ENCODE measurements at regions of chr12 and their contacts with region 1.

Region 1: DNA sequence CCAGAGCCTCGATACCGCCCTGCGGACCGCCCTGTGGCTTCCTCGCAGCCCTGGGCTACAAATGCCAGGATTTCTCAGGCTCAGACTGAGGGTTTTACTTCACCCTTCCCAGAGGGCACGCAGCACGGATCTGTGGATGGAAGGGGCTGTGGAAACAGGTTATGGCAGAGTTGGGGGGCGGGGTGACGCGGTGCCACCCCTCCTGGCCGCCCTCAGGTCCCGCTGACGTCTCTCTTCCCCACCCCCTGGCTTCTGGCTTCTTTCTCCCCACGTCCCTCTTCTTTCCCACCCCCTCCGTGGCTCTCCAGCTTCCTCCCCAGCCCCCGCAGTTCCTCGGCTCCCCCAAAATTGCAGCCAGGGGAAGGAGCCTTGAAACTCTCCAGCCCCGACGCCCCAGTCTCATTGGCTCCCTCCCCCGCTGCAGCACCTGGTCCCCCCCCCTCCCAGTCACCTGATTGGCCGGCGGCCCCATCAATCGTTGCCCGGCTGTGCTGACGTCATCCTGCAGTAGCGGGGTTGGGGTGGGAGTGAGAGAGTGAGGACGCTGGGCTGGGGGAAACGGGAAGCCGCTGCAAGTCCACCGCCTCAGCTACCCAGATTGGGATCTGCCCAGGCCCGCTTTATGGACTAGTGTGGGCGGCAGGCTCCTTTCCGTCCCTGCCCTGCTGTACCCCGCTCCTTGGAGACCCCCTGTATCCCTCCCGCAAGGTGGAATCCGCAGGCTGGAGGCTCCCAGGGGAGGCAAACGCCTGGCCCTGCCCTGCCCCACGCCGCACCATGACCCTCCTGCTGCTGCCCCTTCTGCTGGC is at the start of gene CLSTN3:
- DNase-seq: peak; percentile 54 to 87
- H3K4me3 ChIP-seq: peak within 1 kb of the TSS; percentile 66
- H3K27ac ChIP-seq: no peak within 1 kb of the TSS
- H3K4me1 ChIP-seq: peaks cover 19% of the 10 kb centered on the region
- H3K27me3 ChIP-seq: no peaks in the 10 kb centered on the region
- CTCF ChIP-seq: no peak
- total RNA-seq, gene CLSTN3: 111 and 153 TPM in 2 replicates

Region 2: DNA sequence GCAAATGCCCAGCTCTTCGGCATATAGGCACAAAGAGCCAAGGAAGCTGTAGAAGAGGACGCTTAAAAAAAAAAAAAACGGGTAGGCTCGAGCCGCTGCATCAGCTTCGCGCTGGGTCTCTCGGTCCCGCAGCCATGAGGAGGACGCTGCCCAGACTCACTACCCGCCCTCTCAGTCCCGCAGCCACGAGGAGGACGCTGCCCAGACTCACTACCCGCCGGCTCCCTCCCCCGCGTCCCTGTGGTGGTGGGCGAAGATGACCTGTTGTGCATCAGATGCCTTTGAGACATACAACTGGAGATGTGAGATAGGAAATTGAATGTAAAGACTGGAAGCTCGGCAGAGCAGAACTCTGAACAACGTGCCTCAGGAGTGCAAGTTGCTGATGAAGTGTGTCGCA is 245.5 kb before region 1 on chr12:
- CTCF ChIA-PET with region 1: no interaction called
- POLR2A ChIA-PET with region 1: interaction called, 20 read pairs
- intact Hi-C with region 1: no loop called
- DNase-seq: no peak
- H3K4me3 ChIP-seq: no peak overlapping the region
- H3K27ac ChIP-seq: no peak overlapping the region
- H3K4me1 ChIP-seq: 0 out of 2 replicates have a peak, but pooled peaks cover 5% of the 10 kb centered on the region
- H3K27me3 ChIP-seq: no peaks in the 10 kb centered on the region
- CTCF ChIP-seq: no peak

Region 3: DNA sequence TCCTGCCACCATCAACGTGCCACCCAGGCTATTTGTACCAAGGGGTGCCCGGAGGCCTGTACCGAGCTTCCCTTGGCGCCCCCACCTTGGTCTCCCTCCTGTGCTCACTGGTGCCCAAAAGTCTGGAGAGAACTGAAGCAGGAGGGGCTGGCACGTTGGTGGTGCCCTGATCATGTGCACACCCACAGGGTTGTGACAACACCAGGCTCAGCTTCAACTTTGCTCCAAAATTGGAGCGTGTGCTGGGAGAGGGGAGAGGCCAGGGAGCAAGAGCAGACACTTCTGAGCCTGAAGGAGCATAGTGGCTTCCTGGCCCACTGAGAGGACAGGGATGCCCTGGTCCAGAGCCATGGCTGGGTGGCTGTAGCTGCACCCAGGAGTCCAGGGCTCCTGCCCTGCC is 98.8 kb before region 1 on chr12:
- CTCF ChIA-PET with region 1: no interaction called
- POLR2A ChIA-PET with region 1: interaction called, 14 read pairs
- intact Hi-C with region 1: no loop called
- DNase-seq: no peak
- H3K4me3 ChIP-seq: no peak overlapping the region
- H3K27ac ChIP-seq: no peak overlapping the region
- H3K4me1 ChIP-seq: no peaks in the 10 kb centered on the region
- H3K27me3 ChIP-seq: no peaks in the 10 kb centered on the region; the same call in 1 of the 2 replicates
- CTCF ChIP-seq: no peak

Region 4: DNA sequence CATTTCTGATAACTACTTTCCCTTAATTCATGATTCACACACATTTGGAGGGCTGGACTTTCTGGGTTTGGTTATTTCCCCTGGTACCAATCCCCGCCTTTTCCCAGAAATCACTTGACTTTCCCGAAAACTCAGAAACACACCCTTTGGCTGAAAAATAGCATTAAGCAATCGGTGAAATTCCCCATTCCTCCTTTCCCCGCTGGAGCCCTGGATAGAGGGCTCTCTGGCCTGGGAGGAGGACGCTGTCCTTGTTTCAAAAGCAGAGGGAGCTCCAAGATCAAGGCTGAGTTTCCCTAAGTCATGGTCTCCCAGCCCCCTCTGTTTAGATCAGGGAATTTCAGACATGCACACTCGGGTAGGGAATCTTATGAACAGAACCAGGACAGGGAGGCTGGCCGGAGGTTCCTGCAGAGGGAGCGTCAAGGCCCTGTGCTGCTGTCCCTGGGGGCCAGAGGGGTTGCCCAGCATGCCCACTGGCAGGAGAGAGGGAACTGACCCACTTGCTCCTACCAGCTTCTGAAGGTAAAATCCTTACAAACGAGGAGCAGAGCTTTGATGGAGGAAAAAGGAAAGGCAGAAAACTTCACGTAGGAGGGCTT is 69.6 kb before region 1 on chr12 and contains the start of gene C1S:
- CTCF ChIA-PET with region 1: no interaction called
- POLR2A ChIA-PET with region 1: no interaction called
- intact Hi-C with region 1: no loop called
- DNase-seq: peak; percentile 68 to 69
- H3K4me3 ChIP-seq: no peak within 1 kb of the TSS
- H3K27ac ChIP-seq: no peak within 1 kb of the TSS
- H3K4me1 ChIP-seq: peaks cover 16% of the 10 kb centered on the region; the same call in 1 of the 2 replicates
- H3K27me3 ChIP-seq: peaks cover 2% of the 10 kb centered on the region; the same call in 1 of the 2 replicates
- CTCF ChIP-seq: peak; percentile 73
- total RNA-seq, gene C1S: 32.4 and 32.9 TPM in 2 replicates

Region 5: DNA sequence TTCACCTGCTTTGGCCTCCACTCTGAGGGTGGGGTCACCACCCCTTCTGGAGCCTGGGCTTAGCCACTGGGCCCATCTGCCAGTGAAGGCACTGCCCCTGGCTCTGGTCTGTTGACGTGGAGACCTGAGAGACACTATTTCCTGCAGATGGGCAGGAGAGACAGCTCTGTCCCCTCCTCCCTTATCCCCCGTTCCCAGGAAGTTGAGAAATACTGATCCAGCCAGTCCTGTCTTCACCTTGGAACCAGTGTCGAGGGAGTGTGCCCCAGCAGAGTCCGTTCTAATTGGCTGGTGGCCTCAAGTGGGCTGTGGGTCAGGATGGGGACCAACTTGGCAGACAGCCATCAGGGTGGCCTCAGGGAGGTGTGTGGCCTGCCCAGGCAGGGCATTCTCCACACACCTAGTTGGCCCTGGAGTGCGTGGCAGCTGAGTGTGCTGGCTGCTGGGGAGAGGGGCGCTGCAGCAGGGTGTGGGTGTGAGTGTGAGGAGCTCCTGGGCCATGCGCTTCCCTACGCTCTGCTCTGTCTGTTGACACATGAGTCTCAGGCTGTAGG is 25.5 kb after region 1 on chr12:
- CTCF ChIA-PET with region 1: interaction called, 11 read pairs
- POLR2A ChIA-PET with region 1: interaction called, 8 read pairs
- intact Hi-C with region 1: no loop called
- DNase-seq: peak; percentile 85 to 86
- H3K4me3 ChIP-seq: no peak overlapping the region; the same call in 1 of the 2 replicates
- H3K27ac ChIP-seq: peak overlapping the region; percentile 50
- H3K4me1 ChIP-seq: peaks cover 35% of the 10 kb centered on the region
- H3K27me3 ChIP-seq: no peaks in the 10 kb centered on the region
- CTCF ChIP-seq: no peak

Region 6: GRCh38 chr12:7303230-7303629 is 173.2 kb after region 1 on chr12:
- CTCF ChIA-PET with region 1: no interaction called
- POLR2A ChIA-PET with region 1: no interaction called
- intact Hi-C with region 1: no loop called
- DNase-seq: peak in 1 of 2 experiments; percentile 41
- H3K4me3 ChIP-seq: no peak overlapping the region
- H3K27ac ChIP-seq: no peak overlapping the region
- H3K4me1 ChIP-seq: no peaks in the 10 kb centered on the region
- H3K27me3 ChIP-seq: no peaks in the 10 kb centered on the region
- CTCF ChIP-seq: no peak

Region 7: GRCh38 chr12:7472060-7472459 is 342.0 kb after region 1 on chr12:
- CTCF ChIA-PET with region 1: no interaction called
- POLR2A ChIA-PET with region 1: no interaction called
- intact Hi-C with region 1: no loop called
- DNase-seq: no peak
- H3K4me3 ChIP-seq: no peak overlapping the region
- H3K27ac ChIP-seq: no peak overlapping the region
- H3K4me1 ChIP-seq: no peaks in the 10 kb centered on the region
- H3K27me3 ChIP-seq: no peaks in the 10 kb centered on the region
- CTCF ChIP-seq: no peak

Region 8: GRCh38 chr12:7624478-7624877 is 494.4 kb after region 1 on chr12:
- CTCF ChIA-PET with region 1: no interaction called
- POLR2A ChIA-PET with region 1: interaction called, 15 read pairs
- intact Hi-C with region 1: no loop called
- DNase-seq: no peak
- H3K4me3 ChIP-seq: no peak overlapping the region
- H3K27ac ChIP-seq: no peak overlapping the region
- H3K4me1 ChIP-seq: no peaks in the 10 kb centered on the region
- H3K27me3 ChIP-seq: no peaks in the 10 kb centered on the region
- CTCF ChIP-seq: no peak

Region 9: GRCh38 chr12:7844116-7844515 is 714.0 kb after region 1 on chr12:
- CTCF ChIA-PET with region 1: no interaction called
- POLR2A ChIA-PET with region 1: no interaction called
- intact Hi-C with region 1: no loop called
- DNase-seq: no peak
- H3K4me3 ChIP-seq: no peak overlapping the region
- H3K27ac ChIP-seq: no peak overlapping the region
- H3K4me1 ChIP-seq: no peaks in the 10 kb centered on the region
- H3K27me3 ChIP-seq: no peaks in the 10 kb centered on the region
- CTCF ChIP-seq: no peak

Measured in PC-9 (cell line).